Posterior cingulate gyrus (tissue), 11 donors: ENCODE measurements at regions of chr5 and their contacts with region 1.

Region 1: DNA sequence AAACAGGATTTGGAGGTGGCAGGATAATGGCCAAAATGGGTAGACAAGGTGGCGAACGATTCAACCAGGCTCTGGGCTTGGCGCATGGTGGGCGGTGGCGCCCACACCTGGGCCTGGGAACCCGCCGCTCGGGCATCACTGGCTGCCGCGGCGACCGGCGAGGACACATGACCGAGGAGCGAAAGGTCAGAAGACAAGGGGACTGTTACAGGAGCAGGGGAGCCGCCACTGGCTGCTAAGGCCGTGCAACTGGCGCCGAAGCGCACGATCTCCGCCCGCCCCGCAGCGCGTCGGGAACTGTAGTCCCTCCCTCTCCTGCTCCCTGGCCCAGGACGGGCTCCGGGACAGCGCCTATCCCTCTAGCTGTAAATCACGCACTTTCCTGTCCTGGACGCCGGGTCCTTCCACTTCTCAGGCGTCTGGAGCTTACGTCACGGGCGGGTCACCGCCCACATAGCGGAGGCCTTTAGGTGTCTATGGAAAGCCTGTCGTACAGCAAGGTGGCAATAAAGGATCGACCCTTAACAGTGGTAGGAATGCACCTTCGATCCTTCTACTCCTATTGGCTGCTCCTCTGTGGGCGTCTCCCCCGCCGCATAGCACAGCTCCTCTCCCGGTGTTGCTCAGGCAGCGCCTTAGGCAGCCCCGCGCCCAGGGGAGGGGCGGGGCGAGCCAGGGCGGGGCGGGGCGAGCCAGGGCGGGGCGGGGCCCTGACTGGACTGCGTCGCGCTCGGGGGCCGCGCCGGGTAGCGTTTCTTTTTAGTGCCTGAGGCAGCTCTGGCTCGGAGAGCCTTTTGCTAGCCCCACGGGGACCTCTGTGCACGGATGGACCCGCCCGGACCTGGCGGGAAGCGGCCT is at the start of gene ICE1:
- DNase-seq: peak; percentile 96 to 100 (median 98)

Region 2: DNA sequence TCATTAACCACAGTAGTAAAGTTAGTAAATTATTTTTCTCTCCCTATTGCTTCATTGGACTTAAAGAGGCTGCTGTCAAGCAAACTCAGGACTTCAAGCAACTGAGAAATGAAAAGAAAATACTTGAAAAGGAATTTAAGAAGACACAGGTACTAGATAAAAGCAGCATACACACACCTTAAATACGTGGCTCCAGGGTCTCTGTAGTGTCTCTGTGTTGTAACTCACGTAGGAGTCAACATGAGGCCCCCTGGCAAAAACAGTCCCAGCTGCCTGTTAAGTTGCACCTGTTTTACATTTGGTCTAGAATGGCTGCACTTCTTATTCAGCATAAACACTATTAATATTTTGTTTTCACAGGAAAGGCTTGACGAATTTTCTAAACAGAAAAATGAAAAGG is 25.2 kb after region 1 on chr5:
- intact Hi-C with region 1: no loop called
- DNase-seq: no peak

Region 3: GRCh38 chr5:6712577-6713275 is 1290.5 kb after region 1 on chr5:
- intact Hi-C with region 1: loop called (anchors 5 kb)
- DNase-seq: peak; percentile 92 to 99 (median 94)